Motor neuron (in vitro differentiated cells): ENCODE measurements at regions of chr7 and their contacts with region 1.

Region 1: GRCh38 chr7:85554236-85555178 is 367.7 kb upstream of the SEMA3D start:
- ATAC-seq: peak in 7 of 8 experiments; percentile 34 to 63 (median 52)
- H3K4me3 ChIP-seq: no peak overlapping the region
- H3K27ac ChIP-seq: no peak overlapping the region
- H3K4me1 ChIP-seq: no peaks in the 10 kb centered on the region

Region 2: GRCh38 chr7:85829817-85830432 is 275.4 kb after region 1 on chr7:
- in situ Hi-C with region 1: loop called in 2 of 9 experiments (anchors 25 kb)
- ATAC-seq: peak in 6 of 8 experiments; percentile 33 to 79 (median 56)
- H3K4me3 ChIP-seq: no peak overlapping the region
- H3K27ac ChIP-seq: no peak overlapping the region
- H3K4me1 ChIP-seq: no peaks in the 10 kb centered on the region